CD8-positive, alpha-beta T cell (primary cell): ENCODE measurements at regions of chr9 and their contacts with region 1.

Region 1: DNA sequence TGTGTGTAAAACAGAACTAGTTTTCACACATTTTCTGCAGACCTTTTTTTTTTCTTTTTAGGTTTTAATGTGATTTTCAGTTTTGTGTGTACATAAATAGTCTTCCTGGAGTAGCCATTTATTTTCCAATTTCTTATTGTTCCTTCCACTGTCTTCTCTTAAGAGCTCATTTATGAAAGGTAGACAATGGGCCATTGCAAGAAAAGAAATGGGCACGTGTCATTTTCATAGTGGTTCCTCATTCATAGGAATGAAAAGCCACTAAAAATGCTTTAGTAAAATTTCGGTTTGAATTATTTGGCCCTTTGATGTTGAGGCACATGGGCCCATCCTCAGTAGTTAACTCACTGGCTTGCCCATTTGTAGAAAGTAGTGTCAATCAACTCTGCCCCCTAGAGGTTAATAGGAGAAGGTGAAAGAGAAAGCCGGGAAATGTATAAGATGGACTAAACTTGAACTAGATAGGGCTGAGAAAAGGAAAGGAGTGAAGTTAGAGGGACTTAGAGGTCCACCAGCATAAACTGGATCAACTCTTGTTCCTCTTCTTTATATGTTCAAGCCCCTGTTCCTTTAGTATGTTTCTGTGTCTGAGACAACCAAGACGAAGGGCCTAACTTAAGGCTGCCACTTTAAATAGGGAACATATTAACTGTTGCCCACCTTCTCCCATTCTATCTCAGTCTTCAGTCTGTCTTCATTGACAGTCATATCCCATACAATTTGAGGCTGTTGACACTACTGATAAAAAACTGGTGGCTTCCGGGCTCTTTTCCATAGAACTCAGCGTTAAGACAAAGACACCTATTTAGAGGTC is 72.6 kb downstream of the SMARCA2 start:
- DNase-seq: peak in 2 of 9 experiments; percentile 59 to 72
- ATAC-seq: peak; percentile 98
- H3K4me3 ChIP-seq: no peak overlapping the region
- H3K4me3 Mint-ChIP-seq: no peak overlapping the region
- H3K27ac ChIP-seq: no peak overlapping the region
- H3K27ac Mint-ChIP-seq: no peak overlapping the region
- H3K4me1 ChIP-seq: no peaks in the 10 kb centered on the region
- H3K4me1 Mint-ChIP-seq: peaks cover 12% of the 10 kb centered on the region
- H3K27me3 ChIP-seq: no peaks in the 10 kb centered on the region
- H3K27me3 Mint-ChIP-seq: no peaks in the 10 kb centered on the region
- CTCF ChIP-seq: peak; percentile 86

Region 2: DNA sequence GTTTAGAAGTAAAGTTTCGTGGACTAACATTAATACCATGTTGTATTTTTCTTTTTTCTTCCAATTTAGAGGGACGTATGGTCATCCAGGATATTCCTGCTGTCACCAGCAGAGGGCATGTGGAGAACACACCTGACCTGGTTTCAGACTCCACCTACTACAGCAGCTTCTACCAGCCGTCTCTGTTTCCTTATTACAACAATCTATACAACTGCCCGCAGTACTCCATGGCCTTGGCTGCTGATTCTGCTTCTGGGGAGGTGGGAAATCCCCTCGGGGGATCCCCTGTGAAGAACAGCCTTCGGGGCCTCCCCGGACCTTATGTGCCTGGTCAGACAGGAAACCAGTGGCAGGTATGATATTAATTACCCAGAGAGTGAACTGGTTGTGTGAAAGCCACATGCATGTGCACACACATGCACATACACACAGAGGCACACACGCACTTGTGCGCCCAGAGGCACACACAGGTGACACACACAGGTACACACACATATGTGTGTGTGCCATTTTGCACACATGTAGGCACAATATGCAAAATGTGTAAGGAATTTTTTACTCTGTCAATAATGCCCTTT is 1193.8 kb before region 1 on chr9:
- CTCF ChIA-PET with region 1: no interaction called
- POLR2A ChIA-PET with region 1: no interaction called
- intact Hi-C with region 1: loop called in 1 of 2 experiments (anchors 2 kb)
- DNase-seq: peak in 8 of 9 experiments; percentile 10 to 73 (median 25)
- ATAC-seq: peak; percentile 84
- H3K4me3 ChIP-seq: no peak overlapping the region
- H3K4me3 Mint-ChIP-seq: peak overlapping the region; percentile 17
- H3K27ac ChIP-seq: no peak overlapping the region
- H3K27ac Mint-ChIP-seq: no peak overlapping the region
- H3K4me1 ChIP-seq: peaks cover 4% of the 10 kb centered on the region
- H3K4me1 Mint-ChIP-seq: peaks cover 9% of the 10 kb centered on the region
- H3K27me3 ChIP-seq: no peaks in the 10 kb centered on the region
- H3K27me3 Mint-ChIP-seq: peaks cover 1% of the 10 kb centered on the region
- CTCF ChIP-seq: peak; percentile 61

Region 3: DNA sequence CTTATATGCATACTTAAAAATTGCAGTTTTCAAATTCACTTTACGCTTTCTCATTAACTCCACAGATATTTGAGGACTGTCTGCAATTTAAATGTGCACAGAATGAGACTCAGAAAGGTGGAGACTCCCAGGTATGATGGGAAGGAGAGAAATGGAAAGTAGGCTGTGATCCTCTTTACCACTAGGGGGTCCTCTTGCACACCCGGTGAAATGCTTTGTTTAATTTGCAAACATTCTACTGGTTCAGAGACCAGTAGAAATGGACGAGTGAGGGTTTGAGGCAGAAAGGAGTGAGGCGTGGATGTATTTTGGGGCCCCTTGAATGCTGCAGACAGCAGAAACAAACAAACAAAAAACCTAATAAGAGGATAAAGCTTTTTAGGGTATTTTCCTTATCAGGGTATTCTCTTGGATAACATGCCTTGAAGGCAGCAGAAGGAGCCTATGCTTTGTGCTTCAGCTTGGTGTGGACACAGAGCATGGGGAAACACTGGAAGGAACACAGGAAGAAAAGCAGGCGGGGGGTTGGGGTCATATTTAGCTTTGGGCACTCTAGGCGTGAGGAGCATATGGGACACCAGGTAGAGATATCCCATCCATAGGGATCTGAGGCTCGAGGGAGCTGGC is 627.5 kb before region 1 on chr9:
- CTCF ChIA-PET with region 1: no interaction called
- POLR2A ChIA-PET with region 1: no interaction called
- intact Hi-C with region 1: loop called in 1 of 2 experiments (anchors 2 kb)
- DNase-seq: peak in 2 of 9 experiments; percentile 1 to 10
- ATAC-seq: no peak
- H3K4me3 ChIP-seq: no peak overlapping the region
- H3K4me3 Mint-ChIP-seq: no peak overlapping the region
- H3K27ac ChIP-seq: no peak overlapping the region
- H3K27ac Mint-ChIP-seq: no peak overlapping the region
- H3K4me1 ChIP-seq: no peaks in the 10 kb centered on the region
- H3K4me1 Mint-ChIP-seq: no peaks in the 10 kb centered on the region
- H3K27me3 ChIP-seq: no peaks in the 10 kb centered on the region
- H3K27me3 Mint-ChIP-seq: peaks cover 5% of the 10 kb centered on the region
- CTCF ChIP-seq: peak; percentile 24

Region 4: GRCh38 chr9:1726993-1727759 is 360.5 kb before region 1 on chr9:
- CTCF ChIA-PET with region 1: interaction called, 4 read pairs
- POLR2A ChIA-PET with region 1: no interaction called
- intact Hi-C with region 1: loop called (anchors 1 to 5 kb)
- DNase-seq: peak in 3 of 9 experiments; percentile 5 to 38 (median 22)
- ATAC-seq: no peak
- H3K4me3 ChIP-seq: no peak overlapping the region
- H3K4me3 Mint-ChIP-seq: no peak overlapping the region
- H3K27ac ChIP-seq: no peak overlapping the region
- H3K27ac Mint-ChIP-seq: no peak overlapping the region
- H3K4me1 ChIP-seq: no peaks in the 10 kb centered on the region
- H3K4me1 Mint-ChIP-seq: no peaks in the 10 kb centered on the region
- H3K27me3 ChIP-seq: no peaks in the 10 kb centered on the region
- H3K27me3 Mint-ChIP-seq: peaks cover 15% of the 10 kb centered on the region
- CTCF ChIP-seq: peak; percentile 20

Region 5: DNA sequence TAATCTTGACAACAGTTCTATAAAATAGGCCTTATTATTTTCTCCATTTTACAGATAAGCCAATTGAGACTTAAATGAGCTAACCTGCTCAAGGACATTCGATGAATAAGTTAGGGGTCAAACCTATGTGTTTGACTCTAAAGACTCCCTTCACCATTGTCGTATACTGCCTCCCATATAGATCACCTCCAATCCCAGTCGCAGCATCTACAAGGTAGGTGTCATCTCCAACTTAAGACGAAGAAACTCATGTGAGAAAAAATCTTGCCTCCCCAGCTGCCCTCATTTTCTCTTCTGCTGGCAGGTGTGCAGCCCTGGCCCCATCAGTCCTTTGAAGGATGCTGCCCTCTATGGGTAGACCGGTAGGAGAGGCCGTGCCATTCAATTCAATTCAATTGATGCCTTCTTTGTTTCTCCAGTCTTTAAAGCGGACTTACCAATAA is 147.8 kb before region 1 on chr9:
- CTCF ChIA-PET with region 1: interaction called, 11 read pairs
- POLR2A ChIA-PET with region 1: no interaction called
- intact Hi-C with region 1: loop called (anchors 5 kb)
- DNase-seq: peak in 4 of 9 experiments; percentile 8 to 51 (median 30)
- ATAC-seq: peak; percentile 51
- H3K4me3 ChIP-seq: no peak overlapping the region
- H3K4me3 Mint-ChIP-seq: no peak overlapping the region
- H3K27ac ChIP-seq: no peak overlapping the region
- H3K27ac Mint-ChIP-seq: no peak overlapping the region
- H3K4me1 ChIP-seq: no peaks in the 10 kb centered on the region
- H3K4me1 Mint-ChIP-seq: peaks cover 2% of the 10 kb centered on the region
- H3K27me3 ChIP-seq: no peaks in the 10 kb centered on the region
- H3K27me3 Mint-ChIP-seq: peaks cover 5% of the 10 kb centered on the region
- CTCF ChIP-seq: peak; percentile 37